ENCODE measurements at regions of chr17 and their contacts with region 1.

Region 1: DNA sequence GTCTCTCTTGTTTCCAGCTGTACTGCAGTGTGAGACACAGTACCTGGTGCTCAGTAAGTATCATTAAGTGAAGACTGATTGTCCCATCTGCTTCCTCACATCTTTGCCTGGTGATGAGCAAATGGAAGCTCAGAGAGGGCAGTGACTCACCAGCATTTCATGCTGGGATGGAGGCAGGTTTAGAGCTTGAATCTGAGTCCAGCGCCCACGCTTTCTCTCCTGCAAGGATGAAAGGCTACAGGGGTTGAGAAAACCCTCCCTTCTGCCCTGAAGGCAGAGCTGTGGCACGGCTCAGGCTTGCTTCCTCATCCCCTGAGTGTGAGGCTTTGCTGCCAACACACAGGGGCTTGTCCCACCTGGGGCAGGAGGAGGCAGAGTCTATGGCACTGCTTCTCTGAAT is 1.5 kb upstream of the RNF112 start:
- DNase-seq: no peak
- H3K4me3 ChIP-seq: no peak overlapping the region
- H3K4me3 Mint-ChIP-seq: no peak overlapping the region
- H3K27ac ChIP-seq: no peak overlapping the region
- H3K27ac Mint-ChIP-seq: peak overlapping the region in 1 of 7 donors; percentile 63
- H3K4me1 ChIP-seq: no peaks in the 10 kb centered on the region
- H3K4me1 Mint-ChIP-seq: no peaks in the 10 kb centered on the region
- H3K27me3 ChIP-seq: peaks cover 0 to 9% of the 10 kb centered on the region in 2 donors
- H3K27me3 Mint-ChIP-seq: peaks cover 10 to 15% (median 13%) of the 10 kb centered on the region in 3 donors
- CTCF ChIP-seq: no peak

Region 2: GRCh38 chr17:19338031-19338990 is 71.2 kb before region 1 on chr17:
- intact Hi-C with region 1: no loop called
- DNase-seq: peak; percentile 61 to 73 (median 67)
- H3K4me3 ChIP-seq: no peak overlapping the region
- H3K4me3 Mint-ChIP-seq: no peak overlapping the region
- H3K27ac ChIP-seq: no peak overlapping the region
- H3K27ac Mint-ChIP-seq: no peak overlapping the region
- H3K4me1 ChIP-seq: no peaks in the 10 kb centered on the region
- H3K4me1 Mint-ChIP-seq: no peaks in the 10 kb centered on the region
- H3K27me3 ChIP-seq: peaks cover 0 to 36% of the 10 kb centered on the region in 2 donors
- H3K27me3 Mint-ChIP-seq: peaks cover 20 to 54% (median 27%) of the 10 kb centered on the region in 3 donors
- CTCF ChIP-seq: peak; percentile 90

Region 3: GRCh38 chr17:19440421-19440820 is 30.9 kb after region 1 on chr17:
- intact Hi-C with region 1: loop called in 1 of 2 experiments (anchors 5 kb)
- DNase-seq: no peak
- H3K4me3 ChIP-seq: no peak overlapping the region
- H3K4me3 Mint-ChIP-seq: no peak overlapping the region
- H3K27ac ChIP-seq: no peak overlapping the region
- H3K27ac Mint-ChIP-seq: peak overlapping the region in 1 of 7 donors; percentile 73
- H3K4me1 ChIP-seq: no peaks in the 10 kb centered on the region
- H3K4me1 Mint-ChIP-seq: no peaks in the 10 kb centered on the region
- H3K27me3 ChIP-seq: peaks cover 0 to 2% of the 10 kb centered on the region in 2 donors
- H3K27me3 Mint-ChIP-seq: peaks cover 7 to 24% (median 7%) of the 10 kb centered on the region in 3 donors
- CTCF ChIP-seq: no peak